ENCODE measurements at regions of chr3 and their contacts with region 1.

Region 1: GRCh38 chr3:50154840-50155474 is at the start of gene SEMA3F:
- DNase-seq: peak; percentile 67 to 83
- H3K4me3 ChIP-seq: peak within 1 kb of the TSS; percentile 70
- H3K4me3 Mint-ChIP-seq: peak within 1 kb of the TSS; percentile 90
- H3K27ac Mint-ChIP-seq: peak within 1 kb of the TSS; percentile 76
- H3K4me1 ChIP-seq: peaks cover 25% of the 10 kb centered on the region
- H3K4me1 Mint-ChIP-seq: peaks cover 38% of the 10 kb centered on the region
- H3K27me3 ChIP-seq: no peaks in the 10 kb centered on the region
- H3K27me3 Mint-ChIP-seq: no peaks in the 10 kb centered on the region
- CTCF ChIP-seq: peak in 1 of 2 experiments; percentile 7
- total RNA-seq, gene SEMA3F: 11.3 and 16.5 TPM in 2 replicates

Region 2: GRCh38 chr3:50121416-50122032 is 33.4 kb before region 1 on chr3:
- CTCF ChIA-PET with region 1: interaction called, 6 read pairs
- POLR2A ChIA-PET with region 1: no interaction called
- intact Hi-C with region 1: loop called (anchors 1 kb)
- DNase-seq: peak; percentile 84 to 85
- H3K4me3 ChIP-seq: no peak overlapping the region
- H3K4me3 Mint-ChIP-seq: no peak overlapping the region
- H3K27ac Mint-ChIP-seq: no peak overlapping the region
- H3K4me1 ChIP-seq: peaks cover 32% of the 10 kb centered on the region
- H3K4me1 Mint-ChIP-seq: peaks cover 24% of the 10 kb centered on the region
- H3K27me3 ChIP-seq: no peaks in the 10 kb centered on the region
- H3K27me3 Mint-ChIP-seq: no peaks in the 10 kb centered on the region
- CTCF ChIP-seq: peak; percentile 84 to 87